Endothelial cell of umbilical vein (primary cell): ENCODE measurements at regions of chr7 and their contacts with region 1.

Region 1: DNA sequence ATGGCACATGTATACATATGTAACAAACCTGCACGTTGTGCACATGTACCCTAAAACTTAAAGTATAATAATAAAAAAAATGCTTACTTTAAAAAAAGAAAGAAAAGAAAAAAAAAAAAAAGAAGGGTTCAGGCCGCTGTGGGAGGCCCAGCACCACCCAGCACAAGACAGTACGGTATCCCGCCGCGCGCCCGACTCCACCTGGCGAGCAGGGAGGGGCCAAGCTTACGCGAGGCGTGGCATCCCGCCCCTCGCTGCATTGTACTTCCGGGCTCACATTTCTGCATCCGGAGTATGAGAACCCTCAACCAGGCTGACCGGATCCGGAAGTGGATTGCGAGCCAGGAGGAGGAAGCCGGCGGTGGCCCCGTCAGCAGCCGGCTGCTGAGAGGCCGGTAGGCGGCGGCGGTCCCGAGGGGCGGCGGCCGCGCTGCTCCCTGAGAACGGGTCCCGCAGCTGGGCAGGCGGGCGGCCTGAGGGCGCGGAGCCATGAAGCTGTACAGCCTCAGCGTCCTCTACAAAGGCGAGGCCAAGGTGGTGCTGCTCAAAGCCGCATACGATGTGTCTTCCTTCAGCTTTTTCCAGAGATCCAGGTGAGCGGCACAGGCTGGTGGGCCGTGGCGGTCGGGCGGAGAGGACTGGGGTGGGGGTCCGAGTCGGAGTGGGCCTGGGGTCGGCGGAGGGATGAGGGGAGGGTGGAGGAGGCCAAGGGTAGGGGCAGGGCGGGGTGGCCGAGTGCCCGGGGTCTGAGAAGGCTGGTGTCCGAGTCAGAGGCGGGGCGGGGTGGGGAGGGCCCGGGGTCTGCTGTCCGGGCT is at the start of gene YKT6:
- DNase-seq: peak; percentile 94
- H3K4me3 ChIP-seq: peak within 1 kb of the TSS; percentile 93 to 100 (median 98)
- H3K27ac ChIP-seq: peak within 1 kb of the TSS; percentile 58
- H3K4me1 ChIP-seq: peaks cover 11% of the 10 kb centered on the region
- H3K27me3 ChIP-seq: peaks cover 3 to 10% of the 10 kb centered on the region in 2 experiments
- CTCF ChIP-seq: peak; percentile 45 to 67
- POLR2A ChIP-seq: peak; percentile 94
- total RNA-seq, gene YKT6: 117 and 120 TPM in 2 replicates

Region 2: GRCh38 chr7:44044315-44045225 is 156.3 kb before region 1 on chr7 and contains the start of gene DBNL:
- CTCF ChIA-PET with region 1: no interaction called
- POLR2A ChIA-PET with region 1: no interaction called
- dilution Hi-C with region 1: no loop called
- intact Hi-C with region 1: loop called (anchors 1 kb)
- DNase-seq: peak; percentile 81
- H3K4me3 ChIP-seq: peak within 1 kb of the TSS; percentile 69 to 75 (median 74)
- H3K27ac ChIP-seq: peak within 1 kb of the TSS; percentile 38
- H3K4me1 ChIP-seq: peaks cover 15% of the 10 kb centered on the region
- H3K27me3 ChIP-seq: no peaks in the 10 kb centered on the region
- CTCF ChIP-seq: no peak
- POLR2A ChIP-seq: peak; percentile 91
- total RNA-seq, gene DBNL: 92.1 and 94.0 TPM in 2 replicates

Region 3: DNA sequence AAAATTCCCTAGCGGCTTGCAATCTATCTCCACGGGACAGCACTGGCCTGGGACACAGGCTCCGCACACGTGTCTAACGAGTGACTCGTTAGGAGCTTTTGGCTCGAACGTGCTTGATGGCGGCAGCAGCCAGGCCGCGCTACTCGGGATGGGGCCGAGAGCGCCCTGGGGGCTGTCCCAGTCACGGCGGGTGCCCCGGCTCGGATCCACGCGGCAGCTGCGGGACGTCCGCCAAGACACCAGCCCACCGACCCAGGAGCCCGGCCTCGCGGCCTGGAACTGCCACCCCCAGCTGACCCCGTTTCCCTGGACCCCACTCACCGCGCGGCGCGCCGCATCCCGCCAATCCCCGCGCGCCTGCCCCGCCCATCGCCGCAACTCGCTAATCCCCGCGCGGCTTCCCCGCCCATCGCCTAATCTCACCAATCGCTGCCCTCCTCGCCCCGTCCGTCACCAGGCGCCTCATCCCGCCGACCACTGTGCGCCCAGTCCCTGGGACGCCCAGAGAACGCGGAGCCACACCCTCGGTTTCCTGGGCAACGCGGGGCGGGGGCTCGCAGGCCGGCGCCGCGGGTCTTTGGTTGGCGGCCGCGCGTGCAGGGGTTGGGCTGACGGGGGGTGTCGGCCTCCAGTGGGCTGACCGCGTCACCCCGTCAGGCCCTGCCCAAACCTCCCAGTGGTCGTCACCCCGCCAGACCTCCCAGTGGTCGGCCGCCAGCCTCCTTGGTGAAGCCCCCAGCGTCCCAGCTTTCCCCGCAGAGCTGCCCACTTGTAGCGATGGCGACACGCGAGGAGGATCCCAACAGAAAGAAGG is 77.5 kb before region 1 on chr7 and contains the start of gene POLD2:
- CTCF ChIA-PET with region 1: interaction called, 7 read pairs
- POLR2A ChIA-PET with region 1: no interaction called
- dilution Hi-C with region 1: no loop called
- intact Hi-C with region 1: loop called (anchors 2 kb)
- DNase-seq: peak; percentile 98
- H3K4me3 ChIP-seq: peak within 1 kb of the TSS; percentile 69 to 84 (median 79)
- H3K27ac ChIP-seq: peak within 1 kb of the TSS; percentile 53
- H3K4me1 ChIP-seq: peaks cover 14% of the 10 kb centered on the region
- H3K27me3 ChIP-seq: peaks cover 0 to under 1% of the 10 kb centered on the region in 2 experiments
- CTCF ChIP-seq: no peak
- POLR2A ChIP-seq: peak; percentile 40
- total RNA-seq, gene POLD2: 96.5 and 106 TPM in 2 replicates

Region 4: GRCh38 chr7:44264221-44264931 is 63.5 kb after region 1 on chr7:
- CTCF ChIA-PET with region 1: no interaction called
- POLR2A ChIA-PET with region 1: no interaction called
- dilution Hi-C with region 1: no loop called
- intact Hi-C with region 1: no loop called
- DNase-seq: no peak
- H3K4me3 ChIP-seq: no peak overlapping the region
- H3K27ac ChIP-seq: no peak overlapping the region
- H3K4me1 ChIP-seq: peaks cover 6% of the 10 kb centered on the region
- H3K27me3 ChIP-seq: peaks cover 0 to 12% of the 10 kb centered on the region in 2 experiments
- CTCF ChIP-seq: no peak
- POLR2A ChIP-seq: no peak